AG04449 (cell line): ENCODE measurements at regions of chr11 and their contacts with region 1.

Region 1: DNA sequence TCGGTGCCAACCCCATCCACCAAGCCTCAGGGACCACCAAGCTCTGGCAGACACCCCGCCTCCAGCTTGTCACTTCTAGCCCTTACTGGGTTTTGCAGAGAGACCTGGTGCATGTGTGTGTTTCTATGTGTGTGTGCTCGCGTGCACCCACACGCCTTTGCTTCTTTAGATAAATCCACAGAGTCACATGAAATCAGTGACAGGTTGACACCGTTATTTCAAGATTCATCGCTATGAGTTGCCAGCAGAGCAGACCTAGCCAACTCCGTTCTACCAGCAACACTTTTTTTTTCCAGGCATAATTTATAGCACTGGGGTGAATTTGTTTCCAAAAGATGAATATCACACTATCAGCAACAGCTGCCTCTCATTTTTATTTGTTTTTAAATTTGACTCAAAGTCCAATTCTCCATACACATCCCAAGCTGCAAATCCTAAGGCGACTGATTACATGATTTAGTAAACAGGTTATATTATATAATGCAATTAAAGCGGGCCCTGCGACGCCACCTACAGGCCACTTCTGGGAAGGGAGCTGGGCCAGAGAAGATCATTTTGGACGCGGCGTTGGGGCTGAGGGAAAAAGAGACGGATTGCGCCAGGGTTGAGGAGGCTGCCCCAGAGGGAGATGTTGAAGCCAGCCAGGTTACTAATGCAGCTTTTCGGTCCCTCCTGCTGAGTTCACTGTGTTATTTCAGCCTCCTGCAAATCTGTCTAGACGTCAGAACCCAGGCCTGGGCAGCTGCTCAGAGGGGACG is 150.5 kb downstream of the FEZ1 start:
- DNase-seq: no peak
- H3K4me3 ChIP-seq: no peak overlapping the region
- CTCF ChIP-seq: peak; percentile 80

Region 2: GRCh38 chr11:125091247-125091876 is 254.2 kb before region 1 on chr11:
- CTCF ChIA-PET with region 1: interaction called, 92 read pairs
- POLR2A ChIA-PET with region 1: no interaction called
- DNase-seq: peak; percentile 28
- H3K4me3 ChIP-seq: no peak overlapping the region
- CTCF ChIP-seq: peak; percentile 57

Region 3: DNA sequence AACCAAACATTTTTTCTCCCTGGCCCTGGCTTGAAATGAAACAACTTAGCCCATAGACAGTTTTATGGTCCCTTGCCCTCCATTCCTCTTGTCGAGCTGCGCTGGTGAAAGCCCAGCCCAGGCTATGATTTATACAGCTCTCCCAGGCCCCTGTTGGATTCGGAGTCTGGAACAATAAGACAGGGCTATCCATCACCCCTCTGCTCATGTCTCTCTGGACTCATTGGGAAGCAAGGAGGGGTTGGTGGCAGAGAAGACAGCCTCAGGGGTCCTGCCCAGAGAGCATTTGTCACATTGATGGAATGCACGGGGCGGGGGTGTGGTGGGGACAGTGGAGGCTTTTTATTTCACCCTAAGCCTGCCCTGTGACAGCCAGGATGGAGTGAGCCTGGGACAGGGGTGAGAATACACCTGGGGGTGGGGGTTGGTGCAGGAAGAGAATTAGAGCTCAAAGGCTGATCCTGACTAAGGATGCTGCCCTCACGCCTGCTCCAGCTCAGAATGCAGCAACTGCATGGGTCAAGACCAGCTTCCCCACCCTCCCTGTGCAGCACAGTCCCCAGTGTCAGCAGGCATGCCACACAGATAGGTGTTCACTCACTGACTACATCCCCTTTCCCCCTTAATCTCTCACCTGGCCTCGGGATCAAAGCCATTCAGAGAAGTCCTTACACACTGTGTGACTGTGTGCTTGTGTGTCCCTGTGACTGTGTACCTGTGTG is 191.1 kb before region 1 on chr11:
- CTCF ChIA-PET with region 1: interaction called, 30 read pairs
- POLR2A ChIA-PET with region 1: no interaction called
- DNase-seq: no peak
- H3K4me3 ChIP-seq: no peak overlapping the region
- CTCF ChIP-seq: no peak

Region 4: DNA sequence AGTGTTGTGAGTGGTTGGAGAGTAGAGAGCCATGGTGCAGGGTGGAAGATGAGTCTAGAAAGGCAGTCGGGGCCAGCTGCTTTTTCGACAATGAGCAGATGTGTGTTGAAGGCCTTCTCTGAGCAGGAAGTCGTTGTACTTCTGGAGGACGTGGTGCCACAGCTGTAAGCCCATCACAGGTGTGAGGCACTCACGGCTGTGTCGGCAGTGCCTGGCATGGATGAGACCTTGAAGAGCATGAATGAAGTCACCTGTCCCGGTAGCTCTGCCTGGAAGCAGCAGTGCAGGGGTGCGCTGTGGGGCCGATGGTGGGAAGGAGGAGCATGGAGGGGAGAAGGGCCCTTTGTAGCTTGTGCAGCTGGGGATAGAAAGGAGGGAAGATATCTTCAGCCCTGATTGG is 15.8 kb before region 1 on chr11:
- CTCF ChIA-PET with region 1: interaction called, 59 read pairs
- POLR2A ChIA-PET with region 1: no interaction called
- DNase-seq: no peak
- H3K4me3 ChIP-seq: no peak overlapping the region
- CTCF ChIP-seq: no peak

Region 5: GRCh38 chr11:125404776-125405435 is 59.3 kb after region 1 on chr11:
- CTCF ChIA-PET with region 1: interaction called, 202 read pairs
- POLR2A ChIA-PET with region 1: no interaction called
- DNase-seq: no peak
- H3K4me3 ChIP-seq: no peak overlapping the region
- CTCF ChIP-seq: peak; percentile 99

Region 6: GRCh38 chr11:125494974-125495725 is 149.6 kb after region 1 on chr11:
- CTCF ChIA-PET with region 1: no interaction called
- POLR2A ChIA-PET with region 1: no interaction called
- DNase-seq: no peak
- H3K4me3 ChIP-seq: peak overlapping the region; percentile 73
- CTCF ChIP-seq: no peak

Region 7: GRCh38 chr11:125532668-125533067 is 187.1 kb after region 1 on chr11:
- CTCF ChIA-PET with region 1: no interaction called
- POLR2A ChIA-PET with region 1: no interaction called
- DNase-seq: no peak
- H3K4me3 ChIP-seq: no peak overlapping the region
- CTCF ChIP-seq: no peak